B cell (primary cell): ENCODE measurements at regions of chr12 and their contacts with region 1.

Region 1: DNA sequence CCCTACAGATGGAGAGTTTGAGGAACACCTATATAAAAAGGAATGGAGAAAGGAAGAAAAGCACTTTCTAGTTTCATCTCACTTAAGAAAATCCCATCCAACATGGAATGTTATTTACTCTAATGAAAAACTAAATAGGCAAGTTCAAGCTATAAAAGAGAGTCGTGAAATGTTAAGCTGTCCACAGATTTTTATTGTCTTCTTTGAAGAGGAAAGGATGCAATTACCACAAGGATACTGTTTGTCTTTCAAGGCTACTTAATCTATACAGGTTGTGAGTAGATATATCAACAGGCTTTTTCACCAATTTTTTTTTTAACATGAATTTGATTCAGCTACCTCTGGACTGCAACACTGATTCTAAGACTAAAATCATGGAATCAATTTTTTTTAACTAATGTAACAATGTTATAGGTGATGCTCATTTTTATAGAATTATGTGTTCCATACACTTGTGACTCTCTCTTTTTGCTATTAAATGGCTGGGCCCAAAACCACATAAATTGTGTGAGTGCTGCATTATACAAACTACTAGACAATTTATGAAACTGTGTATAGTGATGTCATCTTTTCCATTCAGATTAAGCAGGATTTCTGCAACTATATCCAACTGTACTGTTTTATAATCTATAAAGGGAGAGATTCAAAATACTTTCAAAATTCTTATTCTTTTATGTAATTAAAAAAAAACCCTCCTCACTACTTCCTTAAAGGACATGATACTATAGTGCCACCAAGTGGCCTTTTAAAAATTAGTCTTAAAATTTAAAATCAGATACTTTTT is 26.8 kb upstream of the BMAL2 start:
- DNase-seq: peak; percentile 57
- ATAC-seq: no peak
- H3K4me3 ChIP-seq: no peak overlapping the region
- H3K4me3 Mint-ChIP-seq: no peak overlapping the region
- H3K27ac ChIP-seq: no peak overlapping the region
- H3K27ac Mint-ChIP-seq: no peak overlapping the region
- H3K4me1 ChIP-seq: no peaks in the 10 kb centered on the region
- H3K4me1 Mint-ChIP-seq: no peaks in the 10 kb centered on the region
- H3K27me3 ChIP-seq: no peaks in the 10 kb centered on the region
- H3K27me3 Mint-ChIP-seq: no peaks in the 10 kb centered on the region
- CTCF ChIP-seq: peak; percentile 84

Region 2: GRCh38 chr12:26853303-26854030 is 452.4 kb before region 1 on chr12:
- CTCF ChIA-PET with region 1: interaction called, 33 read pairs
- POLR2A ChIA-PET with region 1: no interaction called
- intact Hi-C with region 1: loop called (anchors 1 kb)
- DNase-seq: peak; percentile 79
- ATAC-seq: peak; percentile 92
- H3K4me3 ChIP-seq: no peak overlapping the region
- H3K4me3 Mint-ChIP-seq: no peak overlapping the region
- H3K27ac ChIP-seq: no peak overlapping the region
- H3K27ac Mint-ChIP-seq: peak overlapping the region; percentile 13
- H3K4me1 ChIP-seq: peaks cover 3 to 8% of the 10 kb centered on the region in 2 donors
- H3K4me1 Mint-ChIP-seq: no peaks in the 10 kb centered on the region
- H3K27me3 ChIP-seq: no peaks in the 10 kb centered on the region
- H3K27me3 Mint-ChIP-seq: no peaks in the 10 kb centered on the region
- CTCF ChIP-seq: peak; percentile 94

Region 3: GRCh38 chr12:27024291-27024690 is 281.6 kb before region 1 on chr12:
- CTCF ChIA-PET with region 1: interaction called, 26 read pairs
- POLR2A ChIA-PET with region 1: no interaction called
- intact Hi-C with region 1: no loop called
- DNase-seq: no peak
- ATAC-seq: no peak
- H3K4me3 ChIP-seq: no peak overlapping the region
- H3K4me3 Mint-ChIP-seq: peak overlapping the region; percentile 97
- H3K27ac ChIP-seq: no peak overlapping the region
- H3K27ac Mint-ChIP-seq: peak overlapping the region; percentile 53
- H3K4me1 ChIP-seq: peaks cover 14 to 24% of the 10 kb centered on the region in 2 donors
- H3K4me1 Mint-ChIP-seq: peaks cover 40% of the 10 kb centered on the region
- H3K27me3 ChIP-seq: no peaks in the 10 kb centered on the region
- H3K27me3 Mint-ChIP-seq: no peaks in the 10 kb centered on the region
- CTCF ChIP-seq: no peak

Region 4: GRCh38 chr12:27123642-27124041 is 182.2 kb before region 1 on chr12:
- CTCF ChIA-PET with region 1: interaction called, 17 read pairs
- POLR2A ChIA-PET with region 1: no interaction called
- intact Hi-C with region 1: no loop called
- DNase-seq: peak; percentile 48
- ATAC-seq: no peak
- H3K4me3 ChIP-seq: no peak overlapping the region
- H3K4me3 Mint-ChIP-seq: no peak overlapping the region
- H3K27ac ChIP-seq: no peak overlapping the region
- H3K27ac Mint-ChIP-seq: no peak overlapping the region
- H3K4me1 ChIP-seq: no peaks in the 10 kb centered on the region
- H3K4me1 Mint-ChIP-seq: no peaks in the 10 kb centered on the region
- H3K27me3 ChIP-seq: no peaks in the 10 kb centered on the region
- H3K27me3 Mint-ChIP-seq: no peaks in the 10 kb centered on the region
- CTCF ChIP-seq: peak; percentile 58

Region 5: DNA sequence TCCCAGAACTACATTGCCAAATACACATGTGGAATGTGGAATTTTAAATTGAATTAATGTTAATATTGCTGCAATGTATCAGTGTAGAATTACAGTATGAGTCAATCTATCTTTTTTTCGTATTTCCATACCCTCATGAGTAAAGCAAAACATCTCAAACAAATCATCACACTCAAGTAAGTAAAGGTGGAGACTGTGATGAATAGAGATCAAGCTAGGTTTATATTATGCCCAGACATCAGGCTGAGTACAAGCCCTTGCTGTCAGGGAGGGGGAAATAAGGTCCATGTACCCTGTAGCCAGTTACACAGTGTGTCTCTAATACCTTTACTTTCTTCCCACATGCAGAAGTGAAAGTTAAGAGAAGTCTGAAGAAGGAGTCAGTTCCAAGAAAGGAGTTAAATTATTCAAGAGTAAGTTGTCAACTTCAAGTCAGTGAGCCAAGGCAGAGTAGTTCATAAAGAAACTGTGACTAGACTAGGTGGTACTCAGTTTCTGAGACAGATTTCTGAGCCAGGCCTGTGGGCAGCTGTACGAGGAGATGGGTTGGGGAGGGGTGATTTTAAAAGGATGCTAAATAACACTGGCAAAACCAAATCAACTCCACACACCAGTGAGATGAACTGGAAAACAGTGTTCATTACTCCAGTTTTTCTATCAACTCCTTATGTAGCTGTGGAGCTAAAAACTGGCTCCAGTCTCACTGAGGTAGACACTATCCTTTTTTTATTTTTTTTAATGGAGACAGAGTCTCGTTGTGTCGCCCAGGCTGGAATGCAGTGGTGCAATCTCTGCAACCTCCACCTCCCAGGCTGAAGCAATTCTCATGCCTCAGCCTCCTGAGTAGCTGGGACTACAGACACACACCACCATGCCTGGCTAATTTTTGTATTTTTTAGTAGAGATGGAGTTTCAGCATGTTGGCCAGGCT is 85.5 kb before region 1 on chr12:
- CTCF ChIA-PET with region 1: interaction called, 10 read pairs
- POLR2A ChIA-PET with region 1: no interaction called
- intact Hi-C with region 1: no loop called
- DNase-seq: peak; percentile 44
- ATAC-seq: peak; percentile 66
- H3K4me3 ChIP-seq: peak overlapping the region in 1 of 5 experiments; percentile 18
- H3K4me3 Mint-ChIP-seq: peak overlapping the region; percentile 77
- H3K27ac ChIP-seq: peak overlapping the region; percentile 28 to 48
- H3K27ac Mint-ChIP-seq: peak overlapping the region; percentile 78
- H3K4me1 ChIP-seq: peaks cover 32 to 37% of the 10 kb centered on the region in 2 donors
- H3K4me1 Mint-ChIP-seq: peaks cover 31% of the 10 kb centered on the region
- H3K27me3 ChIP-seq: no peaks in the 10 kb centered on the region
- H3K27me3 Mint-ChIP-seq: no peaks in the 10 kb centered on the region
- CTCF ChIP-seq: no peak

Region 6: GRCh38 chr12:27284751-27285150 is 21.1 kb before region 1 on chr12:
- CTCF ChIA-PET with region 1: interaction called, 13 read pairs
- POLR2A ChIA-PET with region 1: no interaction called
- intact Hi-C with region 1: no loop called
- DNase-seq: no peak
- ATAC-seq: no peak
- H3K4me3 ChIP-seq: no peak overlapping the region
- H3K4me3 Mint-ChIP-seq: no peak overlapping the region
- H3K27ac ChIP-seq: no peak overlapping the region
- H3K27ac Mint-ChIP-seq: no peak overlapping the region
- H3K4me1 ChIP-seq: peaks cover 0 to 3% of the 10 kb centered on the region in 2 donors
- H3K4me1 Mint-ChIP-seq: peaks cover 17% of the 10 kb centered on the region
- H3K27me3 ChIP-seq: no peaks in the 10 kb centered on the region
- H3K27me3 Mint-ChIP-seq: no peaks in the 10 kb centered on the region
- CTCF ChIP-seq: no peak

Region 7: DNA sequence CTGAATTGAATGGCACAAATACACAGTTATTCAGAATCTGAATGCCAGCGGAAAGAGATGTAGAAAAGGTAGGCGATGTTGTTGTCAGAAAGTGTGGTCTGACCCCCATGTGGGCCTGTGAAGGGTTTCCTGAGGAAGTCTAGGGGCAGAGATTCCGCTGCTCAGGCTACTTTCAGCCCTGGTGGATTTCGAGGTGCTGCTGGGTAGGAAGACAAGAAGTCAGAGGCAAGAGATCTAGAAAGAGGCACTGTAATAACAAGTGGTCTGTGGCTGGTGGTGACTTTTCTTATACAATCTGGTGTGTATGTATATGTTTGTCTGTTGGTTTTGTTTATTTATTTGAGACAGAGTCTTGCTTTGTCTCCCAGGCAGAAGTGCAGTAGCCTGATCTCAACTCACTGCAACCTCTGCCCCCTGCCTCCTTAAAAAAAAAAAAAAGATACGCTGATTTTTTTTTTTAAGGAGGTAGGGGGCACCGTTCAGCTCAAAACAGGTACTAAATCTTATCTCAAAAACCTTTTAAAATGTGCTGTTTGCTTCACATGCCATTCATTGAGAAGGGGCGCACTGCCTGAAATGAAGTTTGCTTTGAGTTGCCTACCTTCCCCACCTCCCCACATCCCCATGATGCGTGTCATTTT is 501.3 kb after region 1 on chr12:
- CTCF ChIA-PET with region 1: no interaction called
- POLR2A ChIA-PET with region 1: no interaction called
- intact Hi-C with region 1: no loop called
- DNase-seq: no peak
- ATAC-seq: no peak
- H3K4me3 ChIP-seq: no peak overlapping the region
- H3K4me3 Mint-ChIP-seq: no peak overlapping the region
- H3K27ac ChIP-seq: no peak overlapping the region
- H3K27ac Mint-ChIP-seq: no peak overlapping the region
- H3K4me1 ChIP-seq: no peaks in the 10 kb centered on the region
- H3K4me1 Mint-ChIP-seq: no peaks in the 10 kb centered on the region
- H3K27me3 ChIP-seq: no peaks in the 10 kb centered on the region
- H3K27me3 Mint-ChIP-seq: peaks cover 8% of the 10 kb centered on the region
- CTCF ChIP-seq: no peak